CD8-positive, alpha-beta T cell (primary cell): ENCODE measurements at regions of chr6 and their contacts with region 1.

Region 1: DNA sequence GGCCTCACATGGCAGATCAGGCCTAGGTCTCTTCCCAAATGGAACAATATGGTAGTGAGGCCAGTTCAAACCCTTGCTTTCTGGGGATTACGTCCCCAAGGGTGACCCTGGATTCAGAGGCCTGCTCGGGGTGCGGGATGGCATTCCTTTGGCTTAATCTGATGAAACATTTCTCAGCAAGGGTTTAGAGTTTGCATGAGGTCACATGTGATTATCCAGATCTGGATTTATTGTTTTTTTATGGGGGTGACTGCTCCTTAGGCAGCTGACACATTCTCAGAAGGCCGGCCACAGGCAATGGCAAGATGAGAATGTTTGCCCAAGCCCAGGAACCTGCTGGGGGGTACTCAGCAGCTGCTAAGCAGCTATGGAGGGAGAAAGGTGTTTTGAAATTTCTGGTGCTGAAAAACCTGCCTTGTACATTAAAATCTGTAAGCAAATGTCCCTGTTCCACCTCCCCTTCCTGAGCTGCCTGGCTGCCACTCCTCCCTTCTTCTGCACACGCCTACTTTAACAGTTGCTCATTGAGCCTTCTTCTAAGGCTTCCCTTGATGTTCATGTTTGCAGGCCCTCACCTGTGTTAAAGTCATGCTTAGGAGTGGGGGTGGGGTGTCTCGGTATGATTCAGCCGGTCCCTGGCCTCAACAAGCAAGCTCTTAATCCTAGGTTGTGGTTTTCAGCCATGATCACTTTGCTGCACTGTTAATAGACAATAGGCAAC is 37.9 kb upstream of the FUCA2 start:
- DNase-seq: peak in 2 of 9 experiments; percentile 20 to 32
- ATAC-seq: peak; percentile 34
- H3K4me3 ChIP-seq: no peak overlapping the region
- H3K4me3 Mint-ChIP-seq: no peak overlapping the region
- H3K27ac ChIP-seq: no peak overlapping the region
- H3K27ac Mint-ChIP-seq: peak overlapping the region; percentile 9
- H3K4me1 ChIP-seq: peaks cover 10% of the 10 kb centered on the region
- H3K4me1 Mint-ChIP-seq: peaks cover 64% of the 10 kb centered on the region
- H3K27me3 ChIP-seq: no peaks in the 10 kb centered on the region
- H3K27me3 Mint-ChIP-seq: no peaks in the 10 kb centered on the region
- CTCF ChIP-seq: no peak

Region 2: DNA sequence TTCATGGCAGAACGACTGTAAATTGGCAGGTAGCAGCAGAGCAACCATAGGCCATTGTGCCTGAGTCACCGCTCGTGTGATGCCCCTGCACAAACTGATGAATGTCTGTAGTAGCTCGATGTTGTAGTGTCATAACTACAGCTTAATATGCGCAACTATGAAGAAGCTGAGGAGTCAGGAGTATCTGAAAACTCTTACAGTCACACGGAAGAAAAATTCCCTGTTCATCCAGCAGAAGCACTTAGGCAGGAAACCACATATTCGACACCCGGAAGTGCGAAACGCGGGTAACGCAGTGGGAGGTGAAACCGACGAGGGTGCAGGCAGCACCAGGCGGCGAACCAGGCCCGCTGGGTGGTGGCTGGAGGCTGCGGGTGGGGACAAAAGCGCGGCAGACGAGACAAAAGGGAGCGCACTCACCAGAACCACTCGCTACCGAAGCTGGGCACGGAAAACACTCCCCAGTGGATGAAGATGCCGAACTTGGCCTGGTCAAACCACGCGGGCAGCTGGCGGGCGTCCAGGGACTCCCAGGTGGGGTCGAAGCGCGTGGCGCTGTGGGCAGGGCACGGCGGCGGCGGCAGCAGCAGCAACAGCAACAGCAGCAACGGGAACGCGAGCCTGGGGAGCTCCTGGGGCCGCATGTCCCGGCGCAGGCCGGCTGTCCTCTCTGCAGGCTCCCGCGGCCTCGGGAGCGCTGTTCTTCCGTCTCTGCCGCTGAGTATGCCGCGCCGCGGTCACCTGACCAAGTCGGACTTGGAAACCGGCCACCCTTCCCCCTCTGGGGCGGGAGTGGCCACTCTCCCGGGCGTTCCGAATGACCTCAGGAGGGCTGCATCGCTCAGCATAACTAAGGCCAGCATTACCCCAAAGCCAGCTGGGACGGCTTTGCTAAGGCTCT is 38.1 kb before region 1 on chr6 and contains the start of gene FUCA2:
- CTCF ChIA-PET with region 1: interaction called, 3 read pairs
- POLR2A ChIA-PET with region 1: no interaction called
- intact Hi-C with region 1: loop called in 1 of 2 experiments (anchors 2 kb)
- DNase-seq: peak; percentile 28 to 83 (median 64)
- ATAC-seq: peak; percentile 70
- H3K4me3 ChIP-seq: peak within 1 kb of the TSS; percentile 61 to 71
- H3K4me3 Mint-ChIP-seq: peak within 1 kb of the TSS; percentile 90
- H3K27ac ChIP-seq: peak within 1 kb of the TSS; percentile 26 to 70
- H3K27ac Mint-ChIP-seq: peak within 1 kb of the TSS; percentile 82
- H3K4me1 ChIP-seq: peaks cover 10% of the 10 kb centered on the region
- H3K4me1 Mint-ChIP-seq: peaks cover 25% of the 10 kb centered on the region
- H3K27me3 ChIP-seq: no peaks in the 10 kb centered on the region
- H3K27me3 Mint-ChIP-seq: no peaks in the 10 kb centered on the region
- CTCF ChIP-seq: no peak
- total RNA-seq, gene FUCA2: 1.6 to 2.2 TPM

Region 3: DNA sequence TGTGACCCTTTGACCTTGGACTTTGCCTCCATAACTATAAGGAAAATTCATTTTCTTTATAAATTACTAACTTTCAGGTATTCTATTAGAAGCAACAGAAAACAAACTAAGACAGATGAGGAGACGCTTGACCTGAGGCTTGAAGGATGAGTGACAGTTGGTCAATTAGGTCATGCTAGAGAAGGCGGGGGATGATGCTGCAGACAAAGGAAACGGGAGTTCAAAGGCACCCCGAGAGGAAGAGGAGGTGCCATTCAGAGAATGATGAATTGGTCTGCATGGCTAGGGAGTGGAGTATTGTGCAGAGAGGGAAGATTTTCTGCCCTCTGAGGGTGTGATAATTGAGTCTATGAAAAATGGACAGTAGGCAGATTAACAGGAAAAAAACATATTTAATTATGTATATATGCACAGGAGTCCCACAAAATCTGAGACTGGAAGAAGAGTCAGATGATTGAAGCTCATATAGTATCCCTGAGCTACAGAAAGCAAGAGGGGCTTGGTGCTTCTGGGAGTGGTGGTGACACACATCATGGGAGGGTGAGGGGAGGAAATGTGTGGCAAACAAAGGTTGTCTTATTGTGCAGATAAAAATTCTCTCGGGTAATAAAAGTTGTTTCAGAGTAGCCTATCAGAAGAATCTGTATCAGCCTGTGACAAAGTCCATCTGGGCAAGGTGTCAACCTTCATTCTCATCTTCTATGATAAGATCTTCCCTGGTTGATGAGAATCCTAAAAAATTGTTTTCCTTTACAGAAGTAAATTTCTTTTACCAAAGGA is 17.5 kb before region 1 on chr6:
- CTCF ChIA-PET with region 1: interaction called, 4 read pairs
- POLR2A ChIA-PET with region 1: interaction called, 8 read pairs
- intact Hi-C with region 1: loop called in 1 of 2 experiments (anchors 1 kb)
- DNase-seq: no peak
- ATAC-seq: no peak
- H3K4me3 ChIP-seq: no peak overlapping the region
- H3K4me3 Mint-ChIP-seq: no peak overlapping the region
- H3K27ac ChIP-seq: no peak overlapping the region
- H3K27ac Mint-ChIP-seq: no peak overlapping the region
- H3K4me1 ChIP-seq: peaks cover 12% of the 10 kb centered on the region
- H3K4me1 Mint-ChIP-seq: peaks cover 19% of the 10 kb centered on the region
- H3K27me3 ChIP-seq: no peaks in the 10 kb centered on the region
- H3K27me3 Mint-ChIP-seq: no peaks in the 10 kb centered on the region
- CTCF ChIP-seq: no peak